ENCODE measurements at regions of chr3 and their contacts with region 1.

Region 1: GRCh38 chr3:69948246-69948862 is 51.2 kb upstream of the SAMMSON start:
- DNase-seq: peak; percentile 60
- H3K4me3 ChIP-seq: no peak overlapping the region
- H3K27ac ChIP-seq: no peak overlapping the region
- H3K4me1 ChIP-seq: no peaks in the 10 kb centered on the region
- H3K27me3 ChIP-seq: no peaks in the 10 kb centered on the region
- CTCF ChIP-seq: peak; percentile 30 to 39
- POLR2A ChIP-seq: no peak

Region 2: DNA sequence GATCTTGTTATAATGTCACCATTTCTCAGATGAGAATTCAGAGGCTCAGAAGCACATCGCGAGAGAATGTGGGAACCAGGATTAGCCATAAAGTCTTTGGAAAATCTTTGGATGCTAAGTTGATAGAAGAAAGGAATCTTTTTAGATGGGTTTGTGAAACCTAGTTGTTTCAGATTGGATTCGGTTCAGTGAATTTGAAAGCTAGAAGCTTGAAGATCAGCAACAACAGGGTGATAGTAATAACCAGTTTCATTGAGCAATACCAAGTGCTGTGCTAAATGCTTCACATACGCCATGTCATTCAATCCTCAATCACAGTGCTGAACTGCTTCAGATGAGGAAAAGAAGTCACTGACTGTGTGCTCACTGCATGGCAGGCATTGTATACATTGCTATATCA is 256.5 kb before region 1 on chr3:
- CTCF ChIA-PET with region 1: interaction called, 81 read pairs
- POLR2A ChIA-PET with region 1: no interaction called
- dilution Hi-C with region 1: no loop called
- intact Hi-C with region 1: loop called (anchors 1 kb)
- DNase-seq: no peak
- H3K4me3 ChIP-seq: no peak overlapping the region
- H3K27ac ChIP-seq: no peak overlapping the region
- H3K4me1 ChIP-seq: no peaks in the 10 kb centered on the region
- H3K27me3 ChIP-seq: peaks cover 6 to 10% of the 10 kb centered on the region in 2 experiments
- CTCF ChIP-seq: no peak
- POLR2A ChIP-seq: no peak

Region 3: GRCh38 chr3:69925506-69925905 is 22.8 kb before region 1 on chr3:
- CTCF ChIA-PET with region 1: interaction called, 3 read pairs
- POLR2A ChIA-PET with region 1: no interaction called
- dilution Hi-C with region 1: no loop called
- intact Hi-C with region 1: loop called (anchors 1 kb)
- DNase-seq: no peak
- H3K4me3 ChIP-seq: no peak overlapping the region
- H3K27ac ChIP-seq: no peak overlapping the region
- H3K4me1 ChIP-seq: no peaks in the 10 kb centered on the region
- H3K27me3 ChIP-seq: no peaks in the 10 kb centered on the region
- CTCF ChIP-seq: no peak
- POLR2A ChIP-seq: no peak

Region 4: GRCh38 chr3:70333080-70333479 is 384.7 kb after region 1 on chr3:
- CTCF ChIA-PET with region 1: no interaction called
- POLR2A ChIA-PET with region 1: no interaction called
- dilution Hi-C with region 1: no loop called
- intact Hi-C with region 1: no loop called
- DNase-seq: no peak
- H3K4me3 ChIP-seq: no peak overlapping the region
- H3K27ac ChIP-seq: no peak overlapping the region
- H3K4me1 ChIP-seq: no peaks in the 10 kb centered on the region
- H3K27me3 ChIP-seq: no peaks in the 10 kb centered on the region
- CTCF ChIP-seq: no peak
- POLR2A ChIP-seq: no peak